Left cardiac atrium (tissue), 4 donors: ENCODE measurements at regions of chr19 and their contacts with region 1.

Region 1: GRCh38 chr19:10717356-10718204 is at the start of gene DNM2:
- DNase-seq: peak; percentile 98
- ATAC-seq: peak; percentile 93 to 95
- total RNA-seq, gene DNM2: 125 to 186 TPM

Region 2: GRCh38 chr19:10769533-10770491 is 52.2 kb after region 1 on chr19:
- intact Hi-C with region 1: loop called (anchors 5 kb)
- DNase-seq: peak; percentile 69
- ATAC-seq: peak; percentile 78 to 83

Region 3: DNA sequence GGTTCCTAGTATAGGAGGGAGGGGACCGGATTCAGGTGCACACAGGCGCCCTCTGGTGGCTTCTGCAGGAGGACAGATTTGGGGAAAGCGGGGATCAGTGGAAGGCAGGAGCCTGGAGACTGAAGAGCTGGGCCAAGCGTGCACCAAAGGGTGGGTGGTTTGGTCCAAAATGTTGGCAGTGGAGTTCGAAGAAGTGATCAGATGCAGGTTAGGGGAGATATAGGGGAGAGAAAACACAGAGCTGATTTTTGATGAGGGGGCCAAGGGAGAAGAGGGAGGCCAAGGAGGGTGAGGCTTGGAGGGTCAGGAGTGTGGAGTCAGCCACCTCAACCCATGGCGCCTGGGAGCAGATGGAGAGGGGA is 146.9 kb after region 1 on chr19:
- intact Hi-C with region 1: loop called in 1 of 2 experiments (anchors 5 kb)
- DNase-seq: peak; percentile 89
- ATAC-seq: peak; percentile 83 to 87

Region 4: GRCh38 chr19:10870955-10871603 is 153.5 kb after region 1 on chr19 and contains the start of gene CARM1:
- intact Hi-C with region 1: loop called in 1 of 2 experiments (anchors 5 kb)
- DNase-seq: peak; percentile 99
- ATAC-seq: peak; percentile 96 to 97
- total RNA-seq, gene CARM1: 31.9 to 32.4 TPM